Lower leg skin (tissue), 4 donors: ENCODE measurements at regions of chr4 and their contacts with region 1.

Region 1: DNA sequence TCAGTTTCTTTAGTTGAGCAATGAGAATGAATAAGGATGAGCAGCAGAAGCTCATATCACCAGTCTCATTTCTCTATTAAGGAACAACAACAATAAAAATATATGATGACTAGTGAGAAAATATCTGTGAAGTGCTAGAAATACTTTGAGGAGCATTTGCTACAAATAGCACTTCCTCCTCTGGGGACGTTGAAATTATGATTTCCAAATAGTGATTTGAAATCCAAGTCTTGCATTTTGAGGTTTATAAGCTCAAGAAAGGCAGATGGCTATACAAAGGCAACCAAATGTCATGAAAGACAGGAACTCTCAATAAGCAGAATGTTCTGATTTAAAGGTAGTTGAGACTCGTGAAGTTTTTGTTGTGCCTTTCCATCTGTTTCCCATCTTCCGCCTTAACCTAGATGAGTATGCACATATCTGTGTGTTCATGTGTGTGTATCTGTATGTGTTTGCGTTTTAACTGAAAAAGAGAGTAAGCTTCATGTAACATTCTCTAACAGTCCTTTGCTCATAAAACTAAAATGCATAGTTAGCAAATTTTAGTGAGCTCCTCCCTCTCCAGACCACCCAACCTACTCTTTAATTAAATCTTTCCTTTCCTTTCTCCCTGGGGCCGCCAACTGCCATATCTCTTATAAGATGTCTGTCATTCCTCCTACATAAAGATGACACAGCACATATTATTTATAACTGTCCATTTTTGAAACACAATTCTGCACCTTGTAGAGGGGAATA is 222.6 kb upstream of the RASGEF1B start:
- DNase-seq: no peak
- H3K4me3 ChIP-seq: no peak overlapping the region
- CTCF ChIP-seq: no peak
- POLR2A ChIP-seq: no peak

Region 2: DNA sequence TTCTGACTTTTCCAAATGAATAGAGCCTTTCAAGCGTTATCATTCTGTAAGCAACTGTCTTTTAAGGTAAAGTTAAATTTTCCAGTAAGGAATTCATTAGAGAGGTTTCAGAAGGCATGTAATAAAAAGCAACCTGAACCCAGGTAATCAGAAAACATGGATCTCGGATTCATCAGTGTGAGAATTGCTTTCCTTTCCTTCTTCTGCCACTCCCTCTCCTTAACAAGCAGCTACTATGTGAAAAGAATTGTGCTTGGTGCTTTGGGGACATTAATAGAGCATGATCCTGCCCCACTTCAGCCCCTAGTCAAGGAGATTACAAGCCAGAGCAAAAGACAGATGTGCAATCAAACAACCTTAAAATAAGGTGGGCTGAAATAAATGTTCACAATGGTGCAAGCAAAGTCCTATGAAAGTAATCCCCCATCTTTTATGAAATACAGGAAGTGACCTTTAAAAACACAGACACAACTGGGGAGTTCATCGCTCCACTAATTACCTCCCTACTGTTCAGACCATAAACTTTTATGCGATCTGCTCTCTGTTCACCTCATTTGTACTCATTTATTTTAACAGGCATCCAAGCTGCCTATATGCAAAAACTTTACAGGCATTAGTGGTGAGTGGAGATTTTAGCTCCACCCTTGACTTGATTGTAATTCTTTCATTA is 99.7 kb before region 1 on chr4:
- intact Hi-C with region 1: no loop called
- DNase-seq: no peak
- H3K4me3 ChIP-seq: no peak overlapping the region
- CTCF ChIP-seq: no peak
- POLR2A ChIP-seq: no peak

Region 3: DNA sequence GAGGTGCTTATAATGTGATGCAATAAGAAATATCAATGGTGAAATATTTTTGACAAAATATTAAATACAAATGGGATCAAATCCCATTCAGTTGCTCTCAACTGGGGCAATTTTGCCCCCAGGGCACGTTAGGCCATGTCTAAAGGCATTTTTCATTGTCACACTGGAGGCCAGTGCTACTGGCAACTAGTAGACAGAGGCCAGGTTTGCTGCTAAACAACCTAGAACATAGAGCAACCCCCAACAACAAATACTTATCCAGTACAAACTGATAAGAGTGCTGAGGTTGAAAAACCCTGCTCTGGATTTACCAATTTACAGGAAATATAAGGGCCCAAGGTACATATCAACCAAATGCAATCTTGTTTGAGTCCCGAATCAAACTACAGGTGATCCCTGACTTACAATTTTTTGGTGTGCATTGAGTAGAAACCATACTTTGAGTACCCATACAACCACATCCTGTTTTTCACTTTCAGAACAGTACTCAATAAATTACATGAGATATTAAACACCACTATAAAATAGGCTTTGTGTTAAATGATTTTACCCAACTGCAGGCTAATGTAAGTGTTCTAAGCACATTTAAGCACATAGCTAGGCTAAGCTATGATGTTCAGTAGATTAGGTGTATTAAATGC is 441.9 kb after region 1 on chr4:
- intact Hi-C with region 1: no loop called
- DNase-seq: no peak
- H3K4me3 ChIP-seq: no peak overlapping the region
- CTCF ChIP-seq: no peak
- POLR2A ChIP-seq: no peak

Region 4: GRCh38 chr4:82447886-82448285 is 753.5 kb after region 1 on chr4:
- intact Hi-C with region 1: loop called (anchors 5 kb)
- DNase-seq: no peak
- H3K4me3 ChIP-seq: no peak overlapping the region
- CTCF ChIP-seq: no peak
- POLR2A ChIP-seq: no peak